ENCODE measurements at regions of chr1 and their contacts with region 1.

Region 1: GRCh38 chr1:1959840-1960479 is 40.9 kb upstream of the TMEM52 start:
- DNase-seq: peak; percentile 97
- H3K4me3 ChIP-seq: peak overlapping the region; percentile 4 to 48; a peak in 1 of 4 replicates
- H3K27ac ChIP-seq: no peak overlapping the region
- H3K4me1 ChIP-seq: peaks cover 0 to 5% of the 10 kb centered on the region in 2 experiments; a peak in 1 of 4 replicates
- H3K27me3 ChIP-seq: no peaks in the 10 kb centered on the region
- CTCF ChIP-seq: peak; percentile 73
- EP300 ChIP-seq: no peak
- RAD21 ChIP-seq: peak; percentile 78

Region 2: GRCh38 chr1:1943834-1944570 is 16.0 kb before region 1 on chr1:
- CTCF ChIA-PET with region 1: interaction called, 58 read pairs
- POLR2A ChIA-PET with region 1: no interaction called
- DNase-seq: peak; percentile 93
- H3K4me3 ChIP-seq: peak overlapping the region; percentile 26 to 38; a peak in 3 of 4 replicates
- H3K27ac ChIP-seq: no peak overlapping the region
- H3K4me1 ChIP-seq: peaks cover 0 to 22% of the 10 kb centered on the region in 2 experiments; a peak in 1 of 4 replicates
- H3K27me3 ChIP-seq: no peaks in the 10 kb centered on the region
- CTCF ChIP-seq: peak; percentile 66
- EP300 ChIP-seq: no peak
- RAD21 ChIP-seq: peak; percentile 50

Region 3: GRCh38 chr1:1973716-1974642 is 14.0 kb after region 1 on chr1:
- CTCF ChIA-PET with region 1: interaction called, 20 read pairs
- POLR2A ChIA-PET with region 1: no interaction called
- DNase-seq: no peak
- H3K4me3 ChIP-seq: no peak overlapping the region
- H3K27ac ChIP-seq: no peak overlapping the region
- H3K4me1 ChIP-seq: no peaks in the 10 kb centered on the region
- H3K27me3 ChIP-seq: no peaks in the 10 kb centered on the region
- CTCF ChIP-seq: no peak
- EP300 ChIP-seq: no peak
- RAD21 ChIP-seq: no peak

Region 4: GRCh38 chr1:2019172-2019543 is 59.2 kb after region 1 on chr1 and contains the start of gene GABRD:
- CTCF ChIA-PET with region 1: interaction called, 29 read pairs
- POLR2A ChIA-PET with region 1: no interaction called
- DNase-seq: peak; percentile 94
- H3K4me3 ChIP-seq: peak within 1 kb of the TSS in 1 of 2 experiments; percentile 33; a peak in 2 of 4 replicates
- H3K27ac ChIP-seq: no peak within 1 kb of the TSS
- H3K4me1 ChIP-seq: no peaks in the 10 kb centered on the region; a peak in 1 of 4 replicates
- H3K27me3 ChIP-seq: peaks cover 12% of the 10 kb centered on the region; the same call in 1 of the 2 replicates
- CTCF ChIP-seq: no peak
- EP300 ChIP-seq: no peak
- RAD21 ChIP-seq: no peak
- polyA plus RNA-seq, gene GABRD: 0.07 and 0.10 TPM in 2 replicates

Region 5: GRCh38 chr1:2031546-2032540 is 71.9 kb after region 1 on chr1:
- CTCF ChIA-PET with region 1: interaction called, 27 read pairs
- POLR2A ChIA-PET with region 1: no interaction called
- DNase-seq: peak; percentile 89
- H3K4me3 ChIP-seq: no peak overlapping the region
- H3K27ac ChIP-seq: peak overlapping the region in 1 of 2 experiments; percentile 43; a peak in 1 of 4 replicates
- H3K4me1 ChIP-seq: peaks cover 0 to 21% of the 10 kb centered on the region in 2 experiments; a peak in 1 of 4 replicates
- H3K27me3 ChIP-seq: no peaks in the 10 kb centered on the region
- CTCF ChIP-seq: no peak
- EP300 ChIP-seq: peak in 1 of 2 experiments; percentile 55; a peak in 1 of 4 replicates
- RAD21 ChIP-seq: no peak

Region 6: DNA sequence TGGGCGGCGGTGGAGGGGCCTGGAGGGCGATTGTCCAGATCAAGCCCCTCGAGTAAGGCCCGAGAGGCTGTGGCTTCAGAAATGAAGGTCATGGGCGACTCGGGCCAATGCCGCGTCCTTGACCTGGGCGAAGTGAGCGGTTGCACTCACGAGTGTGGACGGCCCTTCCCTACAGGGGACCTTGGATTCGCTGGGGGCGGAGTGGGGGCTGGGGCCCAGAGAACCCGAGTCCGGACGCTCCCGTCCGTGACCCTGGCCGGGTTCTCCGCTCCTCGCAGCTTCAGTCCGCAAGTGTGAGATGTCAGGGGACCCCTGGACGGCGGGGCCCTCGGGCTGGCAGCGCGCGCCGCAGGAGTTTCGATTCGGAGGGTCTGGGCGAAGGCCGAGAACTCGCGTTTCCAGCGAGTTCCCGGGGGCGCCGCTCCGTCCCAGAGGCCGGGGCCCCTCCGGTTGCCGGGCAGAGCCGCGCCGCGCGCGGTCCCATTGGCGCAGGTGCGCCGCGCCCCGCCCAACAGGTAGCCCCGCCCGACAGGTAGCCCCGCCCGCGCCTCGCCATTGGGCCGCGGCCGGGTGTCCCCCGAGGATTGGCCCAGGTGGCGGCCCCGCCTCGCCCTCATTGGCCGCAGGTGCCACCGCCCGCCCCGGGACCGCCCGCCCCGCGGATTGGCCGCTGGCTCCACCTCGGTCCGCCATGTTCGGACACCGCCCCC is 89.9 kb after region 1 on chr1 and contains the start of gene PRKCZ:
- CTCF ChIA-PET with region 1: interaction called, 268 read pairs
- POLR2A ChIA-PET with region 1: no interaction called
- DNase-seq: peak; percentile 97
- H3K4me3 ChIP-seq: peak within 1 kb of the TSS; percentile 56 to 70
- H3K27ac ChIP-seq: peak within 1 kb of the TSS in 1 of 2 experiments; percentile 83; a peak in 1 of 4 replicates
- H3K4me1 ChIP-seq: peaks cover 0 to 17% of the 10 kb centered on the region in 2 experiments; a peak in 1 of 4 replicates
- H3K27me3 ChIP-seq: no peaks in the 10 kb centered on the region
- CTCF ChIP-seq: no peak
- EP300 ChIP-seq: no peak
- RAD21 ChIP-seq: no peak
- polyA plus RNA-seq, gene PRKCZ: 20.1 and 24.2 TPM in 2 replicates